Caco-2 (cell line): ENCODE measurements at regions of chr19 and their contacts with region 1.

Region 1: GRCh38 chr19:7943444-7944176 is at the start of gene TIMM44:
- DNase-seq: peak; percentile 99
- H3K4me3 ChIP-seq: peak within 1 kb of the TSS; percentile 89
- H3K4me3 Mint-ChIP-seq: peak within 1 kb of the TSS; percentile 92
- H3K27ac Mint-ChIP-seq: peak within 1 kb of the TSS; percentile 95
- H3K4me1 ChIP-seq: no peaks in the 10 kb centered on the region; the same call in 1 of the 2 replicates
- H3K4me1 Mint-ChIP-seq: peaks cover 6% of the 10 kb centered on the region
- H3K27me3 ChIP-seq: no peaks in the 10 kb centered on the region
- H3K27me3 Mint-ChIP-seq: no peaks in the 10 kb centered on the region
- CTCF ChIP-seq: no peak
- total RNA-seq, gene TIMM44: 129 and 146 TPM in 2 replicates

Region 2: GRCh38 chr19:7919610-7920518 is 23.7 kb before region 1 on chr19 and contains the start of gene SNAPC2:
- CTCF ChIA-PET with region 1: interaction called, 26 read pairs
- POLR2A ChIA-PET with region 1: interaction called, 15 read pairs
- intact Hi-C with region 1: no loop called
- DNase-seq: peak; percentile 96
- H3K4me3 ChIP-seq: peak within 1 kb of the TSS; percentile 63
- H3K4me3 Mint-ChIP-seq: peak within 1 kb of the TSS; percentile 87
- H3K27ac Mint-ChIP-seq: peak within 1 kb of the TSS; percentile 83
- H3K4me1 ChIP-seq: peaks cover 16% of the 10 kb centered on the region
- H3K4me1 Mint-ChIP-seq: peaks cover 7% of the 10 kb centered on the region
- H3K27me3 ChIP-seq: no peaks in the 10 kb centered on the region
- H3K27me3 Mint-ChIP-seq: no peaks in the 10 kb centered on the region
- CTCF ChIP-seq: no peak
- total RNA-seq, gene SNAPC2: 8.8 and 10.4 TPM in 2 replicates

Region 3: GRCh38 chr19:7970716-7971448 is 27.3 kb after region 1 on chr19:
- CTCF ChIA-PET with region 1: interaction called, 10 read pairs
- POLR2A ChIA-PET with region 1: no interaction called
- intact Hi-C with region 1: no loop called
- DNase-seq: peak; percentile 51 to 68
- H3K4me3 ChIP-seq: no peak overlapping the region
- H3K4me3 Mint-ChIP-seq: no peak overlapping the region
- H3K27ac Mint-ChIP-seq: no peak overlapping the region
- H3K4me1 ChIP-seq: no peaks in the 10 kb centered on the region
- H3K4me1 Mint-ChIP-seq: no peaks in the 10 kb centered on the region
- H3K27me3 ChIP-seq: no peaks in the 10 kb centered on the region
- H3K27me3 Mint-ChIP-seq: no peaks in the 10 kb centered on the region
- CTCF ChIP-seq: peak; percentile 39 to 82

Region 4: GRCh38 chr19:8069096-8069973 is 125.7 kb after region 1 on chr19:
- CTCF ChIA-PET with region 1: interaction called, 3 read pairs
- POLR2A ChIA-PET with region 1: no interaction called
- intact Hi-C with region 1: loop called (anchors 2 kb)
- DNase-seq: peak in 1 of 2 experiments; percentile 31
- H3K4me3 ChIP-seq: no peak overlapping the region
- H3K4me3 Mint-ChIP-seq: no peak overlapping the region
- H3K27ac Mint-ChIP-seq: no peak overlapping the region
- H3K4me1 ChIP-seq: no peaks in the 10 kb centered on the region
- H3K4me1 Mint-ChIP-seq: no peaks in the 10 kb centered on the region
- H3K27me3 ChIP-seq: no peaks in the 10 kb centered on the region
- H3K27me3 Mint-ChIP-seq: no peaks in the 10 kb centered on the region
- CTCF ChIP-seq: peak; percentile 60 to 75

Region 5: DNA sequence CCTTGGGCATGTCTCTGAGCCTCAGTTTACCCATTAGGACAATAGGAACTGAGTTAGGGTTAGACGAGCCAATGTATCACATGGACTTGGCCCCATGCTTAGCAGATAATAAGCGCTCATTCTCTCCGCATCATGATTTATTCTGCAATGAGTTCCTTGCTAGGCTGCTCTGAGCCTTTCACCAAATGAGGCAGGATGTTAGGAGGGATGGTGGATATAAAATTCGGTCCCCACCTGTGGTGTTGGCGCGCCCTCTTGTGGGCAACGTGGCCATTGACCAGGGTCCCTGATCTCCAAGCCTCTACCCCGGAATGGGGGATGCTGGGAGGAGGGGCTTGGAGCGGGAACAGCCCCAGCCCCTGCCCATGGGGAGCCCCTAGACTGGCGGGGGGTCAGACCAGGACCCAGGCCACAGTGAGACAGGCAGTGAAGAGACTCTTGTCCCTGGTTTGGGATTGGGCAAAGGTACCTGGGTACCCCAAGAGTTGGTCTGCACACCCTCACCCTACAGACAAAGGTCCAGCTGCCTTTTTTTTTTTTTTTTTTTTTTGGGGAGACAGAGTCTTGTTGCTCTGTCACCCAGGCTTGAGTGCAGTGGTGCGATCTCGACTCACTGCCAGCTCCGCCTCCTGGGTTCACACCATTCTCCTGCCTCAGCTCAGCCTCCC is 309.4 kb after region 1 on chr19:
- CTCF ChIA-PET with region 1: no interaction called
- POLR2A ChIA-PET with region 1: no interaction called
- intact Hi-C with region 1: loop called (anchors 1 kb)
- DNase-seq: peak; percentile 78 to 88
- H3K4me3 ChIP-seq: no peak overlapping the region
- H3K4me3 Mint-ChIP-seq: no peak overlapping the region
- H3K27ac Mint-ChIP-seq: no peak overlapping the region
- H3K4me1 ChIP-seq: no peaks in the 10 kb centered on the region
- H3K4me1 Mint-ChIP-seq: no peaks in the 10 kb centered on the region
- H3K27me3 ChIP-seq: no peaks in the 10 kb centered on the region
- H3K27me3 Mint-ChIP-seq: no peaks in the 10 kb centered on the region
- CTCF ChIP-seq: peak; percentile 85 to 93